ENCODE measurements at regions of chr18 and their contacts with region 1.

Region 1: GRCh38 chr18:48675352-48675761 is 136.5 kb downstream of the CTIF start:
- DNase-seq: peak; percentile 87
- H3K4me3 Mint-ChIP-seq: no peak overlapping the region
- H3K27ac Mint-ChIP-seq: no peak overlapping the region
- H3K4me1 Mint-ChIP-seq: no peaks in the 10 kb centered on the region
- H3K27me3 Mint-ChIP-seq: no peaks in the 10 kb centered on the region

Region 2: GRCh38 chr18:48639772-48640432 is 35.5 kb before region 1 on chr18:
- CTCF ChIA-PET with region 1: no interaction called
- intact Hi-C with region 1: no loop called
- DNase-seq: no peak
- H3K4me3 Mint-ChIP-seq: no peak overlapping the region
- H3K27ac Mint-ChIP-seq: no peak overlapping the region
- H3K4me1 Mint-ChIP-seq: no peaks in the 10 kb centered on the region
- H3K27me3 Mint-ChIP-seq: peaks cover 2% of the 10 kb centered on the region

Region 3: GRCh38 chr18:49021433-49022129 is 346.2 kb after region 1 on chr18:
- CTCF ChIA-PET with region 1: interaction called, 8 read pairs
- intact Hi-C with region 1: loop called (anchors 5 kb)
- DNase-seq: peak; percentile 78
- H3K4me3 Mint-ChIP-seq: no peak overlapping the region
- H3K27ac Mint-ChIP-seq: no peak overlapping the region
- H3K4me1 Mint-ChIP-seq: no peaks in the 10 kb centered on the region
- H3K27me3 Mint-ChIP-seq: no peaks in the 10 kb centered on the region

Region 4: GRCh38 chr18:49335677-49336076 is 660.3 kb after region 1 on chr18:
- CTCF ChIA-PET with region 1: no interaction called
- intact Hi-C with region 1: loop called (anchors 5 kb)
- DNase-seq: peak; percentile 36
- H3K4me3 Mint-ChIP-seq: no peak overlapping the region
- H3K27ac Mint-ChIP-seq: no peak overlapping the region
- H3K4me1 Mint-ChIP-seq: no peaks in the 10 kb centered on the region
- H3K27me3 Mint-ChIP-seq: no peaks in the 10 kb centered on the region

Region 5: GRCh38 chr18:49459404-49460171 is 784.2 kb after region 1 on chr18:
- CTCF ChIA-PET with region 1: no interaction called
- intact Hi-C with region 1: loop called (anchors 1 kb)
- DNase-seq: peak; percentile 46
- H3K4me3 Mint-ChIP-seq: peak overlapping the region; percentile 89
- H3K27ac Mint-ChIP-seq: no peak overlapping the region
- H3K4me1 Mint-ChIP-seq: peaks cover 45% of the 10 kb centered on the region
- H3K27me3 Mint-ChIP-seq: no peaks in the 10 kb centered on the region

Region 6: DNA sequence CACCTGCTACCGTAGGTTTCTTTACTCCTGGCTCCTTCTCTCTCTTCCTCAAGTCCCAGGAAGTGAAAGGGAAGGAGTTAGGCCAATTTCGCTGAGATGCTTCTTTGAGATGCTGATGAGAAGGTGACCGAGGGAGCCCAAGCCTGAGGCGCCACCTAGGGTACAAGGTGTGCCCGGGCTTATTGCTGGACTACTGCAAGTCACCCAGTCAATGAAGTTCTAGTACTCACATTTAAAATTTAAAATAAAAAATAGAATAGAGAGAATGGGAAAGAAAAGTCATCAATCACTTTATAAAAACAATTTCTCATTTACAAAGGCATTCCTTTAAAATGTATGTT is 1092.7 kb after region 1 on chr18:
- CTCF ChIA-PET with region 1: no interaction called
- intact Hi-C with region 1: loop called (anchors 1 kb)
- DNase-seq: peak; percentile 41
- H3K4me3 Mint-ChIP-seq: no peak overlapping the region
- H3K27ac Mint-ChIP-seq: no peak overlapping the region
- H3K4me1 Mint-ChIP-seq: no peaks in the 10 kb centered on the region
- H3K27me3 Mint-ChIP-seq: no peaks in the 10 kb centered on the region